ENCODE measurements at regions of chr11 and their contacts with region 1.

Region 1: DNA sequence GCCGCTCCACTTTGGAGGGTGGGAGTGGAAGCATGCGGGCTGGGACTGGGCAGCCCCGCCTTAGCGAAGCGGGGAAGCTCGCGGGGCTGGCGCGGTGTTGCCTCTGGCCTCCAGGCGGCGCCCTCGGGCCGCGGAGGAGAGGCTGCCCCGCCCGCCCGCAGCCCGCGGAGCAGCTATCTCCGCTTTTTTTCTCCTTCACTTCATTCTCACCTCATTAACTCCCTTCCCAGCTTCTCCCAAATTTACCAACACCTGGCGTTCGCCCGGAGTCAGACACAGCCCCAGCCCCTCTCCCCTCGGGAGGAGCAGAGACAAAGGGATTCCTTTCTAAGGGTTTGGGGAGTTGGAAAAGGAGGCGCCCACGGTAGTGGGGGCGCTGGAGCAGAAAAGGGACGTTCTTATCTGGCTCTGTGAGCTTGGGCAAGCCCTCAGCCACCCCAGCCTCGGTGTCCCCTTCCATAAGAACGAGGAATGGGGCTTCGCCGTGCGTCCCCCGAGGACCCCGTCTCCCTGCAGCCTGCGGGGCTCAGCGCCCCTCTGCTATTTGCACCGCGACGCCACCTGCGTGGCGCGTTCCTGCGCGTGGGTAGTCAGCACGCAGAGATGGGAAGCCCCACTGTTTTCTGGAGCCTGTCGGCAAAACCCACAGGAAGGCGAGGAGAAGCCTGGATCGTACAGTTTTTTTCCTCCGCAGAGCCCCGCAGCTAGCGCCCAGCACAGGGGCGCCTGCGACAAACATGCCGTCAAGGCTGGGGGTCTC is 1.5 kb upstream of the WNT11 start:
- DNase-seq: peak; percentile 80
- H3K4me3 Mint-ChIP-seq: peak overlapping the region; percentile 74
- H3K27ac Mint-ChIP-seq: no peak overlapping the region
- H3K4me1 Mint-ChIP-seq: peaks cover 22% of the 10 kb centered on the region
- H3K27me3 Mint-ChIP-seq: peaks cover 71% of the 10 kb centered on the region

Region 2: GRCh38 chr11:75858611-75859010 is 349.2 kb before region 1 on chr11:
- CTCF ChIA-PET with region 1: no interaction called
- POLR2A ChIA-PET with region 1: no interaction called
- DNase-seq: no peak
- H3K4me3 Mint-ChIP-seq: no peak overlapping the region
- H3K27ac Mint-ChIP-seq: no peak overlapping the region
- H3K4me1 Mint-ChIP-seq: peaks cover 3% of the 10 kb centered on the region
- H3K27me3 Mint-ChIP-seq: no peaks in the 10 kb centered on the region

Region 3: GRCh38 chr11:75896843-75897419 is 310.9 kb before region 1 on chr11:
- CTCF ChIA-PET with region 1: interaction called, 15 read pairs
- POLR2A ChIA-PET with region 1: no interaction called
- DNase-seq: no peak
- H3K4me3 Mint-ChIP-seq: no peak overlapping the region
- H3K27ac Mint-ChIP-seq: no peak overlapping the region
- H3K4me1 Mint-ChIP-seq: no peaks in the 10 kb centered on the region
- H3K27me3 Mint-ChIP-seq: no peaks in the 10 kb centered on the region

Region 4: DNA sequence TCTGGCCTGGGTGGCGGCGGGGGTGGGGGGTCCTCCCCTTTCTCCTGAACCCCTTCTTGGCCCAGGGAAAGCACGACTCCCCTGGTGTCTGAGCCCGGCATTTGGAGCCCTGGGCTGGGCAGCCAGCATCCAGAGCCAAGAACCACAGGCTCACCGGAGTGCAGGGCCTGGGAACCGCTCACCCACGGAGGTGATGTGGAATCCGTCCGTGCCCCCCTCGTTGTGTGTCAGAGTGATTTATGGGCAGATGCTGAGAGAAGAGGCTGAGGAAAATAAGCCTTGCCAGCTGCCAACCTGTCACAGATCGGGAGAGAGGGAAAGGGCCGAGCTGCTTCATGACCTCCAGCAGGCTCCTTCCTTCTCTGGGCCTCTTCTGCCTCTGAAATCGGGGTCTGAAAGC is 35.2 kb before region 1 on chr11:
- CTCF ChIA-PET with region 1: no interaction called
- POLR2A ChIA-PET with region 1: no interaction called
- DNase-seq: no peak
- H3K4me3 Mint-ChIP-seq: no peak overlapping the region
- H3K27ac Mint-ChIP-seq: no peak overlapping the region
- H3K4me1 Mint-ChIP-seq: peaks cover 15% of the 10 kb centered on the region
- H3K27me3 Mint-ChIP-seq: peaks cover 5% of the 10 kb centered on the region

Region 5: GRCh38 chr11:76225122-76225611 is 17.3 kb after region 1 on chr11:
- CTCF ChIA-PET with region 1: interaction called, 46 read pairs
- POLR2A ChIA-PET with region 1: interaction called, 3 read pairs
- DNase-seq: no peak
- H3K4me3 Mint-ChIP-seq: no peak overlapping the region
- H3K27ac Mint-ChIP-seq: no peak overlapping the region
- H3K4me1 Mint-ChIP-seq: no peaks in the 10 kb centered on the region
- H3K27me3 Mint-ChIP-seq: peaks cover 19% of the 10 kb centered on the region

Region 6: GRCh38 chr11:76248210-76248609 is 40.4 kb after region 1 on chr11:
- CTCF ChIA-PET with region 1: interaction called, 11 read pairs
- POLR2A ChIA-PET with region 1: no interaction called
- DNase-seq: no peak
- H3K4me3 Mint-ChIP-seq: no peak overlapping the region
- H3K27ac Mint-ChIP-seq: no peak overlapping the region
- H3K4me1 Mint-ChIP-seq: no peaks in the 10 kb centered on the region
- H3K27me3 Mint-ChIP-seq: peaks cover 3% of the 10 kb centered on the region

Region 7: DNA sequence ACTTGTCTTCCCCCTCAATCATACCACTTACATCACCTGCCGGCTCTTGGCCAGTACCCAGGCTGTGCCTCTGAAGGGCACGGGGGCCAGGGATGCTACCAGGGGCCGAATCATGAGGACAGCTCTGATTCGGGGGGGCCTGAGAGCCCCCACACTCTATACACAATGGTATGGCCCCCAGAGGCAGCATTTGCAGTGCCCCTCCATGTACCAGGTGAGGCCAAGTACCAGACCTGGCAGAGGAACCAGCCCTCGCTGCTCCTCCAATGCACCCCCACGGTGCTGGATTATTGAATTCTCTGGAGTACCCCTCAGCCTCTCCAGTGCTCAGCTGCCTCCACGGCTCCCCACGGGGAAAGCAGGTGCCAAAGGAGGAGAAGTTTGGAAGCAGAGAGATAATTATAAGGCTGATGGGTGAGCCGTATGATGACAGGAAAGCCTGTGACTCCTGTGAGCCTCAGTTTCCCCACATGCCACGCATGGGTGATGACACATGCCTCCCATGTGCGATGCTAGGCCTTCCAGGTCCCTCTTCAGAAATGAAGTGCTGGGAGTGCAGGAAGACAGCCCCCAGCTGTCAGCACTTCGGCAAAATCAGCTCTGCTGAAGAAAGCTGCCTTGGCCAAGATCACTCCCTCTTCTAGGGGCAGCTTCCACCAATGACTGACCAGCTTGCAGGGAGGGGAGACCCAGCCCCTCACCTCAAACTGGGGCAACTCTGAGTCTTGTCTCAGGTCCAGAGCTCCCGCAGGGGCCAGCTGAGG is 103.2 kb after region 1 on chr11:
- CTCF ChIA-PET with region 1: interaction called, 17 read pairs
- POLR2A ChIA-PET with region 1: interaction called, 5 read pairs
- DNase-seq: no peak
- H3K4me3 Mint-ChIP-seq: no peak overlapping the region
- H3K27ac Mint-ChIP-seq: no peak overlapping the region
- H3K4me1 Mint-ChIP-seq: no peaks in the 10 kb centered on the region
- H3K27me3 Mint-ChIP-seq: peaks cover 6% of the 10 kb centered on the region

Region 8: DNA sequence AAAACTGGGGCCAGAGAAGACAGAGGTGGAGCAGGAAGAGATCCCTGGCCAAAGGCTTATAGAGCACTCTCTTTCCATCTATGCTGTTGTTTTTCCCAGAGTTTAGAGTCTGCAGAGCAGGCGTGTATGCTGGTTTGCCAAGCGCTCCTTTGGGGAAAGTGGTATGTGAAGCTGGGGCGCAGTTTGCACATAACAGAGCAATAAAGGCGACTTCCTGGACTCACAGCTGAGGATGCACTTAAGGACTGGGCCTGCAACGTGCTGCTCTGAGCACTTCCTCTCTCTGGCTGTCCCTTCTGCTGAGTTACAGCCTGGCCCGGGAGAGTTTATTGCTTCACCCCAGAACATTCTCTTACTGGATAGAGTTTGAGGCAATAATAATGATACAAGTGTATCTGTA is 131.4 kb after region 1 on chr11:
- CTCF ChIA-PET with region 1: no interaction called
- POLR2A ChIA-PET with region 1: no interaction called
- DNase-seq: no peak
- H3K4me3 Mint-ChIP-seq: no peak overlapping the region
- H3K27ac Mint-ChIP-seq: peak overlapping the region; percentile 56
- H3K4me1 Mint-ChIP-seq: peaks cover 28% of the 10 kb centered on the region
- H3K27me3 Mint-ChIP-seq: no peaks in the 10 kb centered on the region

Region 9: GRCh38 chr11:76456571-76456970 is 248.7 kb after region 1 on chr11:
- CTCF ChIA-PET with region 1: no interaction called
- POLR2A ChIA-PET with region 1: no interaction called
- DNase-seq: no peak
- H3K4me3 Mint-ChIP-seq: no peak overlapping the region
- H3K27ac Mint-ChIP-seq: no peak overlapping the region
- H3K4me1 Mint-ChIP-seq: peaks cover 2% of the 10 kb centered on the region
- H3K27me3 Mint-ChIP-seq: no peaks in the 10 kb centered on the region

Region 10: DNA sequence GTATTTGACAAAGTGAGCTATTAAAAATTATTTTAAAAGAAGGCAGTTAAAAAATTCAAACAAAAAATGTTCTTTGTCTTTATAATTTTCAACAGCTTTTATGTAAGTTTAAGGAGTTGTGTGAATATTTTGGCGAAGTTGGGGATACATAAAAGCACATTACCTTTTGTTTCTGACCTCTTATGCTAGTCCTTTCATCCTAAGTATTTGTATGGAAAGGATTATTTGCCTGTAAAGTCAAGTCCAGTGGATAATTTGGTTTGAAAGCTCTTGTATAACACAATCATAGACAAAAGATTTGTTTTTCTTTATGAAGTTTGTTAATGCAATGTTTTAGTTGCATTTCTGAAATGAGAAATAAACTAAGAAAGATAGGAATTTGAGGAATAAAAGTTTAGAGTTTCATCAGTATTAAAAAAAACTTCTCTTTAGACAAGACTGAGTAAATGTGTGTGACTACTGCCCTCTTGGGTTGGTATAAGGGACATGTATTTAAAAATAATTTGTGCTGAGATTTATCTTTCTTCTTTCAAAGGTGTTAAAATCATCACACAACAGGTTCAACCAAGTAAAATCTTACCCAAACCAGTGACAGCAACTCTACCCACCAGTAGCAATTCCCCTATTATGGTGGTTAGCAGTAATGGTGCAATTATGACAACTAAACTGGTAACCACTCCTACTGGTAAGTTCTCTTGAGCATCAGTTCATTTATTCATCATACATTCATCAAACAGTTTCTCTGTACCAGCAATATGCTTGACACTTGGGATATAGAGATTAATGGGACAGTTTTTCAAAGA is 305.2 kb after region 1 on chr11:
- CTCF ChIA-PET with region 1: interaction called, 25 read pairs
- POLR2A ChIA-PET with region 1: no interaction called
- DNase-seq: no peak
- H3K4me3 Mint-ChIP-seq: no peak overlapping the region
- H3K27ac Mint-ChIP-seq: no peak overlapping the region
- H3K4me1 Mint-ChIP-seq: no peaks in the 10 kb centered on the region
- H3K27me3 Mint-ChIP-seq: no peaks in the 10 kb centered on the region